ENCODE measurements at regions of chr12 and their contacts with region 1.

Region 1: GRCh38 chr12:47949441-47950308 is 13.7 kb upstream of the TMEM106C start:
- DNase-seq: peak; percentile 84
- H3K4me3 ChIP-seq: no peak overlapping the region
- H3K27ac ChIP-seq: no peak overlapping the region
- H3K4me1 ChIP-seq: no peaks in the 10 kb centered on the region
- H3K27me3 ChIP-seq: no peaks in the 10 kb centered on the region
- CTCF ChIP-seq: peak; percentile 91

Region 2: GRCh38 chr12:47715393-47715876 is 234.2 kb before region 1 on chr12:
- CTCF ChIA-PET with region 1: no interaction called
- POLR2A ChIA-PET with region 1: no interaction called
- intact Hi-C with region 1: loop called (anchors 1 kb)
- DNase-seq: peak; percentile 89
- H3K4me3 ChIP-seq: no peak overlapping the region
- H3K27ac ChIP-seq: no peak overlapping the region
- H3K4me1 ChIP-seq: peaks cover 11% of the 10 kb centered on the region
- H3K27me3 ChIP-seq: no peaks in the 10 kb centered on the region
- CTCF ChIP-seq: peak; percentile 81

Region 3: DNA sequence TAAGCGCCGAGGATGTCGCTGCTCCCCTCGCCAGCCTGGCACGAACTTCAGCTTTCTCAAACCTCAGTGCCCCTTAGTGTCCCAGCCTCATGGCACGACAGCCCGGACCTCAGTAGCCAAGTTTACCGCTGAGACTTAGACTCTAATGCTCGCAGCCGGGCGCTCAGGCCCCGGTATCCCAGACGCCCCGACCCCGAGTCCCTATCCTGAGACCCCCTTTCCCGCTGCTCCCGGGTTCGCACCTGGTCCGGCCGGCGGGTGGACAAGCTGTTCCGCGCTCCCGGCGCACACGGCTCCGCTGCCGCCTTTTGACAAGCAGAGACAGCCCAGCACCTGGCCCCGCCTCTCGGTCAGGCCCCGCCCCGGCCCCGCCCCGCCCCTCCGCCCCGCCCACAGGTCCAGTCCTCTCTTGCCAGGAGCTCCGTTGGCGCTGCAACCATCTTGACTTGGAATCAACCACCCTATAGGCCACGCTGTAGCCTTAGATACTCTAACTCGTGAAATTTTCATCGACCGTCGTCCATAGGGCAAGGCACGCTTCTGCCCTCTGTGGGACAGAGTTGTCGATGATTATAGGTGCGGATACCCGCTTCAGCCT is 44.9 kb before region 1 on chr12 and contains the start of gene VDR:
- CTCF ChIA-PET with region 1: interaction called, 11 read pairs
- POLR2A ChIA-PET with region 1: no interaction called
- intact Hi-C with region 1: no loop called
- DNase-seq: peak; percentile 76
- H3K4me3 ChIP-seq: peak within 1 kb of the TSS; percentile 52
- H3K27ac ChIP-seq: no peak within 1 kb of the TSS
- H3K4me1 ChIP-seq: peaks cover 7% of the 10 kb centered on the region
- H3K27me3 ChIP-seq: peaks cover 34% of the 10 kb centered on the region
- CTCF ChIP-seq: no peak; the same call in 1 of the 2 replicates
- total RNA-seq, gene VDR: 0.43 and 0.76 TPM in 2 replicates

Region 4: GRCh38 chr12:47963340-47964040 is 13.8 kb after region 1 on chr12 and contains the start of gene TMEM106C:
- CTCF ChIA-PET with region 1: interaction called, 10 read pairs
- POLR2A ChIA-PET with region 1: no interaction called
- intact Hi-C with region 1: no loop called
- DNase-seq: peak; percentile 95
- H3K4me3 ChIP-seq: peak within 1 kb of the TSS; percentile 69
- H3K27ac ChIP-seq: peak within 1 kb of the TSS; percentile 26
- H3K4me1 ChIP-seq: peaks cover 6% of the 10 kb centered on the region
- H3K27me3 ChIP-seq: no peaks in the 10 kb centered on the region
- CTCF ChIP-seq: peak; percentile 99
- total RNA-seq, gene TMEM106C: 166 and 182 TPM in 2 replicates